ENCODE measurements at regions of chr10 and their contacts with region 1.

Region 1: GRCh38 chr10:12667052-12667451 is 317.7 kb downstream of the CAMK1D start:
- DNase-seq: no peak
- H3K4me3 ChIP-seq: no peak overlapping the region
- H3K27ac ChIP-seq: no peak overlapping the region
- H3K27me3 ChIP-seq: no peaks in the 10 kb centered on the region
- CTCF ChIP-seq: no peak

Region 2: GRCh38 chr10:12434277-12434676 is 232.8 kb before region 1 on chr10:
- CTCF ChIA-PET with region 1: no interaction called
- POLR2A ChIA-PET with region 1: interaction called, 10 read pairs
- DNase-seq: no peak
- H3K4me3 ChIP-seq: no peak overlapping the region
- H3K27ac ChIP-seq: no peak overlapping the region
- H3K27me3 ChIP-seq: peaks cover 36% of the 10 kb centered on the region
- CTCF ChIP-seq: no peak

Measured in AG04450 (cell line).